Head of caudate nucleus (tissue), 42 donors: ENCODE measurements at regions of chr6 and their contacts with region 1.

Region 1: GRCh38 chr6:110873981-110874879 is at the start of gene AMD1:
- DNase-seq: peak; percentile 96 to 99 (median 98)

Region 2: DNA sequence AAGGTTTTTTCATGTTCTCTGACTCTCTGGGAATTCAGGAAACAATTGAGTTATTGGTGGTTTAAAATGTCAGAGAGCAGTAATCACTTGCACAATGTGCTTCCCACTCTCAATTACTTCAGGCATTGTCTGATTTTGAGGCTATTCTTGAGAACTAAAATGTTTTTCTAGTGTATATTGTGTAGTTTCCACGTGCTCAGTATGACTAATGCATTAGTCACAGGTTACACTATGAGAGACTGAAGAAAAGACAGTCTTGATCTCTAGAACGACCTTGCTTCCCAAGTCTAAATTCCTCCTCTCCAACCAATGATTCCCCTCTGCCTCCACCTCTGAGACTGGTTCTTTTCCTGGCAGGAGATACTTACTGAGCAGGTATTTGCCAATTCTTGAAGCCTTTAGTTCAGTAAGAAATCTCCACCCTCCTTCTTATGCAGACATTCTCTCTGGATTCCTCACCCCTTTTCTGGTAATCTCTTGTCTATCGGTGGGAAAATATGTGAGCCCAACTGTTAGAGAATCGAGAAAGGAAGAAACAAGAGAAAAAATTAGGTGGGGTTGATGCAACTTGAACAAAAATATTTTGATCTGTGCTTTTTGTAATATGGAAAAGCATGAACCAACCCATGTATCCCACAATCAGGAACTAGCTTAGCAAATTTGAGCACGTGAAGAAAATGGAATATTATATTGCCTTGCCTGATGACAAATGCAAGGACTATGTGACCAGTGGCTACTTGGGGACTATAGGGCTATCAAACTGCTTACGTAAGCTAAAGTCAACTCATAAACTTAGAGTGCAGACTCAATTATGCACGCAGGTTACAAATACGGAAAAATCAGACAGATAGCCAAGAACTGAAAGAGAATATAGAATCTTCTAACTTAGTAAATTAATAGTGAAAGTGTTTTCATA is 336.8 kb before region 1 on chr6:
- intact Hi-C with region 1: loop called (anchors 5 kb)
- DNase-seq: peak in 8 of 42 donors; percentile 20 to 72 (median 46)

Region 3: DNA sequence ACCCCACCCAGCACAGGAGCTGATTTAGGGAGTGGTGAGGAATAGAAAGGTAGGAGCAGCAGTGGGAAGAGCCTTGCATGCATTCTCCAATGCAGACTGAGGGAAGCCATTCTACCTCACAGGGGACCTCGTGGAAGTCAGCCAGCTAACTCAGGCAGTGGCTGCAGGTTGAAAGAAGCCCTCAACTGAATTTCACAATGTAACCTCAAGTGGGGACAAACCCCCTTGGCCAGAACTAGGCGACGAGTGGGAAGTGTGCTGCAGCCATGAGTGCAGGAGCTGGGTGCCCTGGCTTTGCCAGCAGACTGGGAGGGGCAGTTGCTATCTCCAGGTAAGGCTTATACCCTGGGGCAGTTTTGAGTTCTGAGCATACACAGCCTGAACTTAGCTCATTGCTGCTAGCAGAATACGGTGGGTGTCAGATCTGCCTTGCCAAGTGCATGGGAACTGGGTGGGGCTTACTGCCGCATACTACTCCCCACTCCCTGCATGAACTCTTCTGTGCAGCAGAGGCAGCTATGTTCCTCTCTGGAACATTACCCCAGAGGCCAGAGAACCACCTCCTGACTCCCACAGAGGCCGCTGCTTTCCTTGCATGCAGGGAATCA is 185.5 kb before region 1 on chr6:
- intact Hi-C with region 1: loop called (anchors 5 kb)
- DNase-seq: peak in 34 of 42 donors; percentile 32 to 93 (median 56)

Region 4: GRCh38 chr6:110815217-110816109 is 58.8 kb before region 1 on chr6 and contains the start of gene CDK19:
- intact Hi-C with region 1: loop called (anchors 1 kb)
- DNase-seq: peak; percentile 96 to 99 (median 98)

Region 5: GRCh38 chr6:110958329-110959192 is 84.3 kb after region 1 on chr6 and contains the start of gene GTF3C6:
- intact Hi-C with region 1: loop called (anchors 10 kb)
- DNase-seq: peak; percentile 92 to 98 (median 96)

Region 6: GRCh38 chr6:111154981-111155380 is 280.8 kb after region 1 on chr6:
- intact Hi-C with region 1: no loop called
- DNase-seq: no peak